ENCODE measurements at regions of chr11 and their contacts with region 1.

Region 1: GRCh38 chr11:44556735-44557409 is 8.6 kb upstream of the CD82 start:
- DNase-seq: peak; percentile 47 to 58
- H3K4me3 ChIP-seq: no peak overlapping the region
- H3K27ac ChIP-seq: no peak overlapping the region
- H3K4me1 ChIP-seq: no peaks in the 10 kb centered on the region
- H3K27me3 ChIP-seq: no peaks in the 10 kb centered on the region
- CTCF ChIP-seq: peak; percentile 86

Region 2: GRCh38 chr11:44095506-44096394 is 461.1 kb before region 1 on chr11 and contains the start of gene EXT2:
- CTCF ChIA-PET with region 1: interaction called, 10 read pairs
- POLR2A ChIA-PET with region 1: no interaction called
- intact Hi-C with region 1: no loop called
- DNase-seq: peak; percentile 60 to 88
- H3K4me3 ChIP-seq: peak within 1 kb of the TSS; percentile 82
- H3K27ac ChIP-seq: peak within 1 kb of the TSS; percentile 41
- H3K4me1 ChIP-seq: peaks cover 16% of the 10 kb centered on the region
- H3K27me3 ChIP-seq: no peaks in the 10 kb centered on the region
- CTCF ChIP-seq: peak; percentile 87
- total RNA-seq, gene EXT2: 72.4 and 74.8 TPM in 2 replicates

Region 3: GRCh38 chr11:44592125-44592940 is 35.5 kb after region 1 on chr11:
- CTCF ChIA-PET with region 1: no interaction called
- POLR2A ChIA-PET with region 1: no interaction called
- intact Hi-C with region 1: loop called (anchors 2 kb)
- DNase-seq: no peak
- H3K4me3 ChIP-seq: no peak overlapping the region
- H3K27ac ChIP-seq: no peak overlapping the region
- H3K4me1 ChIP-seq: no peaks in the 10 kb centered on the region
- H3K27me3 ChIP-seq: no peaks in the 10 kb centered on the region
- CTCF ChIP-seq: no peak

Region 4: DNA sequence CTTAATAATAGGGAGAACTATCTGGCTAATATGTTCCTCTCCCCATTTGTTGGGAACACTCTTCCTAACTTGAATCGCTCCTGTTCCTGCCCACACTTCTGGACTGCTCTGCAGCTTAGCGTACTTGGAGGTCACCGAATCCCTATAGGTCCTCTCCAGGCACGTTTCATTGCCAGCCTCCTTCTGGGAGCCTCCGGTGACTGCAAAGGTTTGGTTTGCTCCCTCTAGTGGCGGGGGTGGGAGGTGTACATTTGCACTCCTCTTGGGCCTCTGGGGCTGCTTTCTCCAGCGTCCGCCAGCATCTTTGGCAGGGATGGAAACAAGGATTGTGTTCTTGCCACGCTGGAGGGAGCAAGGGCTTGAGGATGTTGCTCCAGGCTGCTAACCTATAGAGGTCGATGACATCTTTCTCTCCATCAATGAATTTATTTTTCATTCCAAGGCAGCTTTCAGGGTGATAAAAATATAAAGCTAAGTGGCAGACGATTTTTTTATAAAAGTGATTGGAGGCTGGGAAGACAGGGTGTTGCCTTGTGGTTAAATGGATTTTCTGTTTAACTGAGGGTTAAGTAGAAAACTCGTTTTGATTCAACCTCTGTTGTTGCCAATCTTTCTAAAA is 218.6 kb after region 1 on chr11:
- CTCF ChIA-PET with region 1: no interaction called
- POLR2A ChIA-PET with region 1: no interaction called
- intact Hi-C with region 1: loop called (anchors 2 kb)
- DNase-seq: peak; percentile 41 to 45
- H3K4me3 ChIP-seq: no peak overlapping the region
- H3K27ac ChIP-seq: no peak overlapping the region
- H3K4me1 ChIP-seq: no peaks in the 10 kb centered on the region
- H3K27me3 ChIP-seq: peaks cover 40% of the 10 kb centered on the region
- CTCF ChIP-seq: peak; percentile 91

Region 5: DNA sequence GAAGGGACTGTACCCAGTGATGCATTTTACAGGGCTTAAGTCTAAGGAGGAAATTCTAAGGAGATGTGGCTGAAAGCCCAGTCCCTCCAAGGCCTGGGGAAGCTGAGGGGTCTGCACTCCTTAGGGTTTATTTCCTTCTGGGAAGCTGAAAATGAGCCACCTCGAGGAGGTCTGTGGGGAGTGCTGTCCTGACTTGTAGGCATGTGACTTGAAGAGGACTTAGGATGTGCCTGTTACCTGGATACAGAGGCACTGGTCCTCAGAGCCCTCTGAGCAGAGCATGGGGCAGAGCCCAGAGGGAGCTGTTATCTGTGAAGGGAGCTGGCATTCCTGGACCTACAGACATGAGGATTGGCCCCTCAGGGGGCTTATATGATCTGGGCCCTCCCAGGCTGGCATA is 316.7 kb after region 1 on chr11:
- CTCF ChIA-PET with region 1: interaction called, 10 read pairs
- POLR2A ChIA-PET with region 1: no interaction called
- intact Hi-C with region 1: no loop called
- DNase-seq: no peak
- H3K4me3 ChIP-seq: no peak overlapping the region
- H3K27ac ChIP-seq: no peak overlapping the region
- H3K4me1 ChIP-seq: no peaks in the 10 kb centered on the region
- H3K27me3 ChIP-seq: peaks cover 47% of the 10 kb centered on the region
- CTCF ChIP-seq: no peak

Region 6: DNA sequence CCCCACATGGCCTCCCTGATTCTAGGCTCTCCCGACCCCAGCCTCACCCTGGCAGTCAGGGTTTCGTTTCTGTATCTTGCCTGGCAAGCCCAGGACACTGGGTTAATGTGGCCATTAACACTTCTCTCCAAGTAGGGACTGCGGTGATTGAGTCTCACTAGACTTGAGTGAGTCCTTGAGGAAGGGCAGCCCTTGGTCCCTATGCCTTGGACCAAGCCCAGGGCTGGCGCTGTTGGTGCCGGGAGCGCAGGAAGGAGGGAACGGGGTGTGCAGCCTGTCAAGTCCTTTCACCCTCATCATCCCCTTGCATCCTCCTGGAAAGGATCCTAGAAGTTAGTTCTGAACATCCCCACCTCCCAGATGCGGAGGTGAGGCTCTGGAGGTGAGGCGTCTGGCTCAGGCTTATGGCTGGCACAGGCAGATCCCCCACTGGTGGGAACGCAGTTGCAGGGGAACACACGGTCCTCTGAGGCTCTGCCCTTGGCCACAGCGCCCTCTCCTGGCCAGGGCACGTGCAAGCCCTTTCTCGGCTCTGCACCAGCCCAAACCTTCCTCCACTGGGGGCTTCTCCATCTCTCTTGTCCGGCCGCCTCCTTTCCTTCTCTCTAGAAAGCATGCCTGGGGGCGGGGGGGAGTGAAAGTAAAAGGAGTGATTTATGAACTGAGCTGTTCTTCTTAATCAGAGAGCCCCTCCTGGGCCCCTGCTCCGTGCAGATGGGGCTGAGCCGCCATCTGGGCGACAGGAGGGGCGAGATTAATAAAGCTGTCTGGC is 337.2 kb after region 1 on chr11:
- CTCF ChIA-PET with region 1: no interaction called
- POLR2A ChIA-PET with region 1: no interaction called
- intact Hi-C with region 1: no loop called
- DNase-seq: peak in 1 of 2 experiments; percentile 37
- H3K4me3 ChIP-seq: no peak overlapping the region
- H3K27ac ChIP-seq: no peak overlapping the region
- H3K4me1 ChIP-seq: no peaks in the 10 kb centered on the region
- H3K27me3 ChIP-seq: peaks cover 84% of the 10 kb centered on the region
- CTCF ChIP-seq: peak; percentile 85

Region 7: GRCh38 chr11:44911029-44911814 is 354.4 kb after region 1 on chr11:
- CTCF ChIA-PET with region 1: interaction called, 7 read pairs
- POLR2A ChIA-PET with region 1: no interaction called
- intact Hi-C with region 1: loop called (anchors 1 kb)
- DNase-seq: peak; percentile 59 to 69
- H3K4me3 ChIP-seq: no peak overlapping the region
- H3K27ac ChIP-seq: no peak overlapping the region
- H3K4me1 ChIP-seq: no peaks in the 10 kb centered on the region
- H3K27me3 ChIP-seq: peaks cover 46% of the 10 kb centered on the region
- CTCF ChIP-seq: peak; percentile 95

Measured in PC-9 (cell line).